Lower leg skin (tissue), 4 donors: ENCODE measurements at regions of chr12 and their contacts with region 1.

Region 1: GRCh38 chr12:91824991-91825390 is 320.7 kb downstream of the BTG1 start:
- DNase-seq: no peak
- H3K4me3 ChIP-seq: no peak overlapping the region
- CTCF ChIP-seq: no peak
- POLR2A ChIP-seq: no peak

Region 2: DNA sequence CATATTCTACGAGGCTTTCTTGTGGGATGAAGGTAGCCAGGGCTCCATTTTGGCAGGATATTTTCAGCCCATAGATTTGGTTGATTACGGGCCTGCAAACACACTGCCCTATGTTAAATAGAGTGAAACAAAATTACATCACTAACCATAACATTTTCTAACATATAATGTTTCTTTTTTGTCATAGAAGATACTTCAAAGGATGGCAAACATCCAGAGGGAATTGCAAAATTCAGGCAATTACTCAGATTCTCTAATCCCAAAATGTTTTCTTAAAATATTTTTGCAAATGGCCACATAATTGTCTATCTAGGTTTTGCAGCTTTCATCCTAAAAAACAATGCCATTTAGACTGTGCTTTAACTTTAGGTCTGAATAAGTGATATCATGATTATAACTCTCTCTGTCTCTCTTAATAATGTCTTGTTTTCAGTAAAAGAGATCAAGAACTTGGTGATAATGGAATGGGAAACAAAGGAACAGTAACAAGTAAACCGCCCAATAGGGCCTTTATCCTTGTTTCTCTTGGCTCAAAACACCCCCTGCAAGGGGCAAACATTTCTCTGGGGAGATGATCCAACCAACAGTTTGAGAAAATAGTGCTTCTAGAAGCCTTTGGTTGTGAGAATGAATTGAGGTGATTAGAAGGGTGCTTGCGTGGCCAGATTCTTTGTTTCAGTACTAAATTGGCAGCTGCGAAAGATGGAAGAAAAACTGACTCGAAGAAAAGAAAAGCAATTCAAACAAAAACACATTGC is 375.0 kb after region 1 on chr12:
- intact Hi-C with region 1: no loop called
- DNase-seq: no peak
- H3K4me3 ChIP-seq: no peak overlapping the region
- CTCF ChIP-seq: no peak
- POLR2A ChIP-seq: no peak

Region 3: GRCh38 chr12:92356425-92356824 is 531.4 kb after region 1 on chr12:
- intact Hi-C with region 1: no loop called
- DNase-seq: no peak
- H3K4me3 ChIP-seq: no peak overlapping the region
- CTCF ChIP-seq: no peak
- POLR2A ChIP-seq: no peak

Region 4: DNA sequence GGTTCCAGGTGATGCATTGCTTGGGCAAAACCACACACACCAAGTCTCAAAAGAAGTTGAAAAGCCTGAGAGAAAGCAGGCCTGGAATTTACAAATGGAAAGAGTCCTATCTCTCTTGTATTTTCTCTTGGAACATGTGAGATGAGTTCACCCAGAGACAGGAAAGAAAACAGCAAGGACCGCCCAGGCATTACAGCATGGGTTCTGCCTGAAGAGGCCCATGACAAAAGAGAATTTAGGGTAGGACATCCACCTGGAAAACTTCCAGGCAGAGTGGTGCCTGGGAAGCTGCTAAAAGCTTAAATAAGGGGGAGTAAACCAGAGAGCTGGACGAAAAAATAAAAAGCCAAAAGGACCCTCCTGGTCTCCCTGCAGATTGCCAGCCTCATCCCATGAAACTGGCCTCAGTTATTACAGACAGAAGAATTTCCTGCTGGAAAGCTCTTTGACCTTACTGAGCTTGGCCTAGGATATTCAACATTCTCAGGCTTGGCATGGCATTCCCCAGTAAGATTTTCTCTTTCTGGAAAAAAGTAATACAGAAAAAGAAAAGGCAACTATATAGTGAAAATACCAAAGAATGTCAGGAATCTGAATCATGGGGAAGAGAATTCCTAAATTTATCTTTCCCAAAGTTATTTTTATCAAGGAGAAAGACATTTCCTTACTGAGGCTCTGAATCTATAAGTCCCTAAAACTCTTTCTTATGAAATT is 1431.4 kb after region 1 on chr12:
- intact Hi-C with region 1: loop called (anchors 5 kb)
- DNase-seq: no peak
- H3K4me3 ChIP-seq: no peak overlapping the region
- CTCF ChIP-seq: no peak
- POLR2A ChIP-seq: no peak